T-cell (primary cell): ENCODE measurements at regions of chr10 and their contacts with region 1.

Region 1: GRCh38 chr10:13414894-13415293 is 66.8 kb upstream of the SEPHS1 start:
- DNase-seq: no peak
- ATAC-seq: no peak
- H3K4me3 ChIP-seq: no peak overlapping the region
- H3K4me3 Mint-ChIP-seq: no peak overlapping the region
- H3K27ac ChIP-seq: no peak overlapping the region
- H3K27ac Mint-ChIP-seq: no peak overlapping the region
- H3K4me1 ChIP-seq: no peaks in the 10 kb centered on the region
- H3K4me1 Mint-ChIP-seq: no peaks in the 10 kb centered on the region
- H3K27me3 ChIP-seq: peaks cover 0 to 29% of the 10 kb centered on the region in 2 experiments
- H3K27me3 Mint-ChIP-seq: peaks cover 11 to 22% of the 10 kb centered on the region in 2 donors

Region 2: DNA sequence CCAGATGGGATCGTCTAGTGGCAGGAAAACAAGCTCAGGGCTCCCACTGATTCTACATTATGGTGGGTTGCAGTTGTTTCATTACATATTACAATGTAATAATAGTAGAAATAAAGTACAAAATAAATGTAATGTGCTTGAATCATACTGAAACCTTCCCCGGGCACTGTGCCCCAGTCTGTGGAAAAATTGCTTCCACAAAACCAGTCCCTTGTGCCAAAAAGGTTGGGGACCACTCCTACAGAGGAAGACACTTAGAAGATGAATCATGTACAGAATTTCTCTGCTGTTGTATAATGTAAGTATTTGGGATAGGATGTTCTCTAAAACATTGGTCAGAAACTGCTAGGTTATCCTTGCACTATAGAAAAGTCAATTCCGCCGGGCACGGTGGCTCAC is 103.7 kb before region 1 on chr10:
- CTCF ChIA-PET with region 1: no interaction called
- POLR2A ChIA-PET with region 1: no interaction called
- DNase-seq: no peak
- ATAC-seq: no peak
- H3K4me3 ChIP-seq: no peak overlapping the region
- H3K4me3 Mint-ChIP-seq: no peak overlapping the region
- H3K27ac ChIP-seq: no peak overlapping the region
- H3K27ac Mint-ChIP-seq: no peak overlapping the region
- H3K4me1 ChIP-seq: no peaks in the 10 kb centered on the region
- H3K4me1 Mint-ChIP-seq: no peaks in the 10 kb centered on the region
- H3K27me3 ChIP-seq: no peaks in the 10 kb centered on the region
- H3K27me3 Mint-ChIP-seq: no peaks in the 10 kb centered on the region

Region 3: GRCh38 chr10:14225379-14226150 is 810.7 kb after region 1 on chr10:
- CTCF ChIA-PET with region 1: interaction called in 1 of 2 experiments, 12 read pairs
- POLR2A ChIA-PET with region 1: no interaction called
- DNase-seq: no peak
- ATAC-seq: no peak
- H3K4me3 ChIP-seq: no peak overlapping the region
- H3K4me3 Mint-ChIP-seq: no peak overlapping the region
- H3K27ac ChIP-seq: no peak overlapping the region
- H3K27ac Mint-ChIP-seq: no peak overlapping the region
- H3K4me1 ChIP-seq: no peaks in the 10 kb centered on the region
- H3K4me1 Mint-ChIP-seq: no peaks in the 10 kb centered on the region
- H3K27me3 ChIP-seq: peaks cover 0 to 8% of the 10 kb centered on the region in 2 experiments
- H3K27me3 Mint-ChIP-seq: peaks cover 20 to 34% of the 10 kb centered on the region in 2 donors